ENCODE measurements at regions of chr5 and their contacts with region 1.

Region 1: DNA sequence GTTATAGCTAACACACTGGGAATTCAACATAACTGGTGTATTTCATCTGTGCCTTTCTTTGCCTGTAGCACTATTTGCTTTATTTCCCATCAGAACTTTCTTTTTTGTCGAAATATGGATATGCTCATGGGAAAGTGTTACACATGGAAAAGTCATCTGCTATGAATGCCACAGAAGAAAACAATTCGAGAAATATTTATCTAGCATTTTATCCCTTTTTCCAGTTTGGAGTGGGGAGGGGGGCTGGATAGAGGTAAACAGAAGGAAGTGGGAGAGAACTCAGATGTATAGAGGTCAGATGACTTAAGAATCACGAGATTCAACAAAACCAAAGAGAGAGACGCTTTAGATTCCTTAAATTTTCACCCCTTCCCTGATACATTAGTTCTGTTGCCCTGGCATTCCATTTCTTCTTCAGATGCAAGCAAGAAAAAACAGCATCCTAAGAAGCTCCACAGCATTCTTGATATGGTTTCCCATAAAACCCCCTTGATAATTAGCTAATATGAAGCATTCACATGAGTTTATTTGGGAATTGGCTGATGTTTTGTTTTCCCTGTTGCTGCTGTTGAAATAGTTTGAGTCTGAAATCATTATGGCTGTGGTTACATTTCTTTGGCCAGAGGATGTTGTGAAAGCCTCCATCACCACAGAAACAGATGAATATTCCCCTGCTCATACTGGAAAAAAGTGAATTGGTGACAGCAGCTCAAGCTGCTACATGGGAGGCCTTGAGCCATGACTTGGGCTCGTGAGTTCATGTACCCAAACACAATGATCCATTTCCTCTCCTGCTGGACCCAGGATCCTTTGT is 335.8 kb upstream of the DAB2 start:
- DNase-seq: peak; percentile 84
- H3K4me3 ChIP-seq: no peak overlapping the region
- H3K27ac ChIP-seq: peak overlapping the region; percentile 47
- H3K4me1 ChIP-seq: peaks cover 19% of the 10 kb centered on the region
- H3K27me3 ChIP-seq: no peaks in the 10 kb centered on the region
- CTCF ChIP-seq: no peak

Region 2: DNA sequence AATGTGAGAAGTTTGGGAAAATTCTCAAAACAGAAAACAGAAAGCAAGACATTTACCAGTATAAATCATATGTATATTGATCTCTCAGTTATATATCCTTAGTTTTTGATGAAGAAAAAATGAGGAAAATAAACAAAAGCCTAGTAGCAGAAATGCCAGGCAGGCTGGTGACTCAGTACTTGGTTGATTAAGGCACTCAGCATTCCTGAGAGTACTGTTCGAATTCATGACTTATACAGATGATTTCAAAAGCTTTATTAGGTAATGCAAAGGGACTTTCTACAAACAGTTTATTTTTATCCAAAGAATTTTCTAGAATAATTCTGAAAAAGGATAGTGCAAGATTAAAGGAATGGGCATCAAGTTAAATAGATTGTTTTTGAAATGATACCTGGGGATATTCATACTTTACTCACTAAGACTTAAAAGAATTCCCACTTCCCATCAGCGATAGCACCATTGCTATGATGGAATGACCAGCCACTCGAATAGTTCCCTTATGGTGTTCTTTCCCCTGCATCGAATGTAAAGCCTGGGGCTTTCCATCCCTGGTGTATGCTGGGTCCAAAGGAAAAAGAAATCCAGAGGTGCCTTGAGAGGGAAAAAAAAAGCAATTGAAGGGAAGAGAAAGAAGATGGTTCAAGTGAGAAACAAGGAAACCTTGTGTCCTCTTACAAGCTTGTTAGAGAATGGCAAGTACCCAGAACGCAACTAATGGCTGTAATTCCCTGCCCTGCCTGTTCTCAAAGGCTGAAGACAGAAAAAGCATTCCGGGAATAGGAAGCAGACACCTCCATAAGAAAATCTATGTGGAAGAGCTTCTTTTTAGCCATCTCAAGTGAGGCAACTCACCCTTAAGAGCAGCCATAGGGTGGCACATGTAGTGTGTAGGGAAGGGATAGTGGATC is 15.1 kb after region 1 on chr5:
- CTCF ChIA-PET with region 1: no interaction called
- dilution Hi-C with region 1: no loop called
- in situ Hi-C with region 1: no loop called
- intact Hi-C with region 1: loop called (anchors 2 kb)
- DNase-seq: peak; percentile 65
- H3K4me3 ChIP-seq: no peak overlapping the region
- H3K27ac ChIP-seq: no peak overlapping the region
- H3K4me1 ChIP-seq: no peaks in the 10 kb centered on the region
- H3K27me3 ChIP-seq: no peaks in the 10 kb centered on the region
- CTCF ChIP-seq: no peak

Region 3: DNA sequence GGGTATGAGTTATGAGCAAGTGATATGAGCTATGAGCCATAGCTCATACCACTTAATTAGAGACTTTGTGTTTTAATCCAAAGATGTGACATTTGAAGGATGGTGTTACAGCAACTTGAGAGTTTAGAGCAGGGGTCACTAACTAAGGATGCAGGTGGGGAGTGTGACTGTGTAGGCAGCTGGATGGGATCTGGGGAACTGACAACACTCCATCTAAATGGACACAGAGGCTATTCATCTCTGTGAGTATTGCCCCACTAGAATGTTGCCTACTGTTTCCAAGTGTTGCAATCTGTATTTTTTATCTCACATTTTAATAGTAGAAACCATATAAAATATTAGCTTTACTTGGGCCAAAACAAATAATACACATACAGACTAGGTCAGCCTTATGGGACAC is 152.3 kb after region 1 on chr5:
- CTCF ChIA-PET with region 1: no interaction called
- dilution Hi-C with region 1: no loop called
- in situ Hi-C with region 1: no loop called
- intact Hi-C with region 1: no loop called
- DNase-seq: no peak
- H3K4me3 ChIP-seq: no peak overlapping the region
- H3K27ac ChIP-seq: no peak overlapping the region
- H3K4me1 ChIP-seq: no peaks in the 10 kb centered on the region
- H3K27me3 ChIP-seq: no peaks in the 10 kb centered on the region
- CTCF ChIP-seq: no peak